Aorta (tissue), 5 donors: ENCODE measurements at regions of chr1 and their contacts with region 1.

Region 1: GRCh38 chr1:207404849-207405525 is 49.1 kb upstream of the CR2 start:
- DNase-seq: no peak
- ATAC-seq: peak; percentile 71
- H3K4me3 ChIP-seq: no peak overlapping the region
- H3K27ac ChIP-seq: no peak overlapping the region
- H3K4me1 ChIP-seq: no peaks in the 10 kb centered on the region
- H3K27me3 ChIP-seq: no peaks in the 10 kb centered on the region

Region 2: DNA sequence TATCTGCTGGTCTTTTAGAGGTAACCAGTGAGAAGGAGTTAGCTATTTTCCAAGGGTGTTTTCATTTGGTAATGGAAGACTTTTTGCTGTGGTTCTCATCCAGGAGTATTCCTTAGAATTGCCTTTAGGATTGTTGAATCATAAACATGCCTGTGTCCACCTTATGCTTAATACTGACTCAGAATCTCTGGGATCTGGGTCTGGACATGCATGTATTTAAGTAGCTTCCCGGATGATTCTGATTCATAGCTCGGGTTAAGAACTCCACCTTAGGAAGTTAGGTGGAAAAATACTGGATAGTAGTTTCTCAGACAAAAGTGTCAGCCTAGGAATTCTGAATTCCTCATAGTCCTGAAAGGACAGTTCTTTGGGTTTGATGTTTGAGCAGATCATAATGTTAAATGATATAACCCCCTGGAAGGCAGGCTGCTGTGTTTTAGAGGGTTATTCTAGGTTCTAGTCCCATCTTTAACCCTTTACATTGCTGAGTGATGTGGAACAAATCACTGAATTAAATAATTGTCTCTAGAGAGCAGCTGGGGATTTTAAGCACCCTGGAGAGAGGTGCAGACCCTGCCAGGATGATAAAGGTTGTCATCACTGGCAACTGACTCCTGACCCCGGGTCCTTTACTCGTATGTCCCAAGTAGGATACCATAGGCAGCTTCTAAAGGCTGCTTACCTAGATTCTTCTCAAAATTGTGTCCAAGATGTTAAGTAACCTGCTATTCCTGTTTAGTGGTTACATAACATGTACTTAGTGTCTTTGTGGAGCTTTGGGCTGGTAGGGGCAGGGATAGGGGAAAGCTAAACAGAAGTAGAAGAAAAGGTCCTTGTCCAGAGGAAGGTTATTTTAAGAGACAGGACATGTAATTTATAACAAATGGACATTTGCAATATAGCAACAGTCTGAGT is 330.8 kb before region 1 on chr1:
- intact Hi-C with region 1: no loop called
- DNase-seq: no peak
- ATAC-seq: no peak
- H3K4me3 ChIP-seq: no peak overlapping the region
- H3K27ac ChIP-seq: no peak overlapping the region
- H3K4me1 ChIP-seq: no peaks in the 10 kb centered on the region
- H3K27me3 ChIP-seq: no peaks in the 10 kb centered on the region

Region 3: DNA sequence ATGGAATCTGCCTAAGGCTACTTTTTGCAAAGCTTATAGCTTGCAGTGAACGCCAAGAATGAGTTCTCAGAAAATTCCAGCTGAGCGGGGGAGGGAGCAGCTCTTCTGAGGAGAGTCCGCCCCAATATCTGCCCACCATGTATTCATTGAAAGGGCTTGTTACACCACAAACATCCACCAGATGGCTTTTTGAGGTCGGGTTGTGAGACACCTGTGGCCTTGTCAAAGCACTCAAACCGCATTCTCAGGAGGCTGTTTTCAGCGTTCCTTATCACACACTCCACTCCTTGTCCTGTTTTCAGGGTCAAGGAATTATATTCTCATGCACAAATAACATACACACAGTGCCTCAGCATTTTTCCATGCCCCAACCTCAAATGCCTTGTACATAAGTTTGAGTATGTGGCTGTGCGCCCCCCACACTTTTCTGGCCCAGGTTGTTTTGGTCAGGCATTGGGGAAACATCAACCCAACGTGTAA is 320.2 kb before region 1 on chr1:
- intact Hi-C with region 1: loop called (anchors 2 to 5 kb)
- DNase-seq: no peak
- ATAC-seq: no peak
- H3K4me3 ChIP-seq: no peak overlapping the region
- H3K27ac ChIP-seq: no peak overlapping the region
- H3K4me1 ChIP-seq: no peaks in the 10 kb centered on the region
- H3K27me3 ChIP-seq: no peaks in the 10 kb centered on the region

Region 4: DNA sequence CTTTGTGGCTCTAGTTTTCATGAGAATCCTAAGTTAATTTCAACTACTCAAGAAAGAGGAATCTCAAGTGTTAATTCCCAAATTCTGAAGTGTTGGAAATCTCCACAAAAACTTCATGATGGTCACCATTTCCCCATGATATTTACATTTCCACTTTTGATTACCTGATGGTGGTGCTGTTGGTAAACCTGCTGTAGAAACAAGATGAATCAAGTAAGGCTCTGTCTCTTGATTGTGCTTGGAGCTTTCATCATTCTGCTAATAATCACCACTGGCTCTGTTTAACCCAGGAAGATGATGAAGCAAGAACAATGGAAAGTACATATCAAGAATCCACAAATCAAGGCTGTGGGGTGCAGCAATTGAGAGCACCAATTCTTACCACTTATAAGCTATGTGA is 223.1 kb before region 1 on chr1:
- intact Hi-C with region 1: loop called in 1 of 2 experiments (anchors 5 kb)
- DNase-seq: no peak
- ATAC-seq: no peak
- H3K4me3 ChIP-seq: no peak overlapping the region
- H3K27ac ChIP-seq: no peak overlapping the region
- H3K4me1 ChIP-seq: no peaks in the 10 kb centered on the region
- H3K27me3 ChIP-seq: no peaks in the 10 kb centered on the region

Region 5: DNA sequence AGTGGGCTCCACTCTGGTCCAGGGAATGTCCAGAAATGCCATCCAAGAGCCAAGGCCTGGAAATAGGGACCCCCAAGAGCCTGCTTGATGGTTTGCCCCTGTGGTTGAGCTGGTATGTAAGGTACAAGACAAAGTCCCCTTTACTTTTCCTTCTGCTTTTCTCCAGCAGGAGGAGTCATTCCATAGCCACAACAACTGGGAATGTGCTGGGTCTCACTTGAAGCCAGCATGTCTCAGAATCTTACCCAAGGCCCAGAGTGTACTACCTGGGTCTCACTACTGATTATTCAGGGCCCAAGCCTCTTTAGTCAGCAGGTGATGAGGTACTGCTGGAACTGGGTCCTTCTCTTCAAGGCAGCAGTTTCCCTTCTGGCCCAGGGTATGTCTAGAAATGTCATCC is 145.6 kb before region 1 on chr1:
- intact Hi-C with region 1: loop called in 1 of 2 experiments (anchors 10 kb)
- DNase-seq: no peak
- ATAC-seq: no peak
- H3K4me3 ChIP-seq: no peak overlapping the region
- H3K27ac ChIP-seq: no peak overlapping the region
- H3K4me1 ChIP-seq: no peaks in the 10 kb centered on the region
- H3K27me3 ChIP-seq: no peaks in the 10 kb centered on the region